ENCODE measurements at regions of chr18 and their contacts with region 1.

Region 1: DNA sequence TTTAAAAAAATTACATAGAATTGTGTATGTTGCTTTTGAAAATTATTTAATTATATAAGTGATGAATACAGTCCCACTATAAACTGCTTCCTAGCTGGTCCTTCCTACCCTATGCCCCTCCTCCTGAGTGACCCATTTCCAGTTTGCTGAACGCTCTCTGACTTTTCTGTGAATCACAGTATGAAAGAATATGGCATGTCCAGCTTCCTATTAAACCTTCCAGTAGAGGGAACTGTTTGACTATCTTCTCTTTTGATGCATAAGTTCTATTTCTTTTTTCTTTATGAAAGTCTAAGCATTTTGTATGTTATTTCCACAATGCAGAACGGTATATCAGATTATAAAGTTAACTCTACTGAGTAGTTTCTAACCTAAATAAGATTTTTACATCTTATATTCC is 41.3 kb downstream of the PSMG2 start:
- DNase-seq: peak in 2 of 5 donors; percentile 28 to 56
- H3K4me3 ChIP-seq: no peak overlapping the region
- H3K27ac ChIP-seq: no peak overlapping the region
- H3K4me1 ChIP-seq: no peaks in the 10 kb centered on the region
- H3K27me3 ChIP-seq: no peaks in the 10 kb centered on the region
- CTCF ChIP-seq: peak; percentile 32

Region 2: DNA sequence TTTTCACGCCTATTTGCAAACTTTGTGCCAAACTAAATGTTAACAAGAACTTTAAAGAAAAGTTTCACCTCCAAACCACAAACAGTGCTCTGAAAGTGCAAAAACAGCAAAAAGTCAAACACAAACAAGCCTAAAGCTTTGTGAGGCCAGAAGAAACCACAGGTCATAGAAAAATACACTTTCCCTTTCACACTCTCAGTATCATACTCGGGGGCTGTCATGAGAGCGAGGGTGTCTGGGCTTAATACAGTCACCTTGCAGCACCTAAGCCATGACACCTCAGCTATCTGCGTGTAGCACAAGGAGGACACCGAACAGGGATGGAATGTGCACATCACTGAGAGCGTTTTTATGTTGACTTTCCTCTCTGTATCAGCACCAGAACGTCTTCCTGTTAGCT is 177.1 kb after region 1 on chr18:
- intact Hi-C with region 1: loop called (anchors 5 kb)
- DNase-seq: no peak
- H3K4me3 ChIP-seq: no peak overlapping the region
- H3K27ac ChIP-seq: no peak overlapping the region
- H3K4me1 ChIP-seq: no peaks in the 10 kb centered on the region
- H3K27me3 ChIP-seq: no peaks in the 10 kb centered on the region
- CTCF ChIP-seq: no peak

Region 3: DNA sequence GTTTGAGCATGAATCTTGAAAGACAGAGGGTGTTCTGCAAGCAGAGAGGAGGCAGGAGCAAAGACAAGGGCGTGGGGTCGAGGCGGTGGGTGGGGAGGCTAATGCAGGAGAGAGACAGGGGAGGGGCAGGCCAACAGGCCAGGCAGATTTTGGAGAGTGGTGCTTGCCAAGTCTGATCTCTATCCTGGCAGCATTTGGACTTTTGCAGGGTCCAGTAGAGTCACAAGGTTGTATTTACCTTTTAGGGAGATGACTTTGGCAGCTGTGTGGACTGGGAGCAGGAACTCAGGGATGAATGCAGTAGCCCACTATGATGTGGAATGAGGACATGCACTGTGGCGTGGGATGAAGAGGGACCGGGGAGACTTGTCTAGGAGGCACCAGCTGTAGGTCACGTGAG is 231.4 kb after region 1 on chr18:
- intact Hi-C with region 1: no loop called
- DNase-seq: no peak
- H3K4me3 ChIP-seq: no peak overlapping the region
- H3K27ac ChIP-seq: no peak overlapping the region
- H3K4me1 ChIP-seq: no peaks in the 10 kb centered on the region
- H3K27me3 ChIP-seq: no peaks in the 10 kb centered on the region
- CTCF ChIP-seq: no peak

Measured in kidney (tissue), 22 donors.